Right lobe of liver (tissue), 6 donors: ENCODE measurements at regions of chr1 and their contacts with region 1.

Region 1: GRCh38 chr1:113982033-113982931 is 3.0 kb downstream of the OLFML3 start:
- DNase-seq: peak in 2 of 3 donors; percentile 51
- ATAC-seq: peak; percentile 61 to 79 (median 68)
- H3K4me3 ChIP-seq: no peak overlapping the region
- H3K27ac ChIP-seq: no peak overlapping the region
- H3K4me1 ChIP-seq: peaks cover 0 to 6% (median 0%) of the 10 kb centered on the region in 4 donors
- H3K27me3 ChIP-seq: no peaks in the 10 kb centered on the region
- CTCF ChIP-seq: no peak
- POLR2A ChIP-seq: no peak

Region 2: DNA sequence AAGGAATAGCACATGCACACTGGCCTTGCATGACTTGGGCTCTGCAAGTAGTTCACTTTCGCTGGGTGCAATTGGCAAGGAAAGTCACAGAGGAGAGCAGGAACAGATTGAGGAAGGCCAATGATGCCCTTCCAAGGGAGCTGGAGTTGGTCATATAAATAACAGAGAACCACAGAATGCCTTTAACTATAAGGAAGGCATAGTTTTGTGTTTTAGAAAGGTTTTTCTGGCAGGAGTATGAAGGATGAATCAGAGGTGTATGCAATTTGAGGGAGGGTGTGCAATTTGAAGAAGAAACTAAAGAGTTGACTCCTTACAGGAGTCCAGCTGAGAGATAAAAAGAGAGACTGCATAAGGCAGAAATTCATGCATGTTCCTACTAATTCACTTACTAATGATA is 335.1 kb before region 1 on chr1:
- intact Hi-C with region 1: no loop called
- DNase-seq: no peak
- ATAC-seq: no peak
- H3K4me3 ChIP-seq: no peak overlapping the region
- H3K27ac ChIP-seq: no peak overlapping the region
- H3K4me1 ChIP-seq: no peaks in the 10 kb centered on the region
- H3K27me3 ChIP-seq: no peaks in the 10 kb centered on the region
- CTCF ChIP-seq: no peak
- POLR2A ChIP-seq: no peak

Region 3: GRCh38 chr1:114081437-114082303 is 99.4 kb after region 1 on chr1:
- intact Hi-C with region 1: no loop called
- DNase-seq: peak in 1 of 3 donors; percentile 26
- ATAC-seq: peak; percentile 56 to 78 (median 62)
- H3K4me3 ChIP-seq: no peak overlapping the region
- H3K27ac ChIP-seq: no peak overlapping the region
- H3K4me1 ChIP-seq: no peaks in the 10 kb centered on the region
- H3K27me3 ChIP-seq: no peaks in the 10 kb centered on the region
- CTCF ChIP-seq: no peak
- POLR2A ChIP-seq: no peak

Region 4: DNA sequence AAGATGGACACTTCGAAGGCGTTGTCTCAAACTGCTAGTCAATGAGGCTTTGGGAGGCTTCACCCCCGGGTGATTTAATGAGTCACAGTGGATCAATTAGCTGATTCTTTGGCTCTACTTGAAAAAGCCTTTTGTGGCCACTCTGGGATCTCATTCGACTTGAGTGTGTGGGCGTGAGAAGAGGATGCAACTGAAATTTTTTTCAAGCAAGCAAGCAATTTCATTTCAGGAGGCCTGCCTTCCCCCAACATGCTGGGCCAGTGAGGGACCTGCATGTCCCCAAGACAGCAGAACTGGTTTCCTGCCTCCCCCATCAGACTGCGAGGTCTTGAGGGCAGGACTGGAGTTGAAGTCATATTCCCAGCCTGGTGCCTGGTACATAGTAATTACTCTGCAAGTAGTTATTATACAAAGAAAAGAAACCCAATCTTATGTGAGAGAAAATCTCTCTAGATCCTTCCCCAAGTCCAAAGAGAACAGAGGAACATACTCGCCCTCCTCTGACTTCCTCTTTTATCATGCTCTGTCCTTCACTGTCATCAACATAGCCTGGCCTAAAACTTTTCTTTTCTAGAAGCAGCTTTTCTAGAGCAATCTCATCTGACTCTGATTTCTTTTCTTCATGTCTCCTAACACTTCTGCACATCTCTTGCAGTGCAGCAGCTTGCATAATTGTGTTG is 148.7 kb after region 1 on chr1:
- intact Hi-C with region 1: loop called in 1 of 2 experiments (anchors 5 kb)
- DNase-seq: no peak
- ATAC-seq: peak in 1 of 4 donors; percentile 33
- H3K4me3 ChIP-seq: no peak overlapping the region
- H3K27ac ChIP-seq: no peak overlapping the region
- H3K4me1 ChIP-seq: no peaks in the 10 kb centered on the region
- H3K27me3 ChIP-seq: no peaks in the 10 kb centered on the region
- CTCF ChIP-seq: no peak
- POLR2A ChIP-seq: no peak

Region 5: DNA sequence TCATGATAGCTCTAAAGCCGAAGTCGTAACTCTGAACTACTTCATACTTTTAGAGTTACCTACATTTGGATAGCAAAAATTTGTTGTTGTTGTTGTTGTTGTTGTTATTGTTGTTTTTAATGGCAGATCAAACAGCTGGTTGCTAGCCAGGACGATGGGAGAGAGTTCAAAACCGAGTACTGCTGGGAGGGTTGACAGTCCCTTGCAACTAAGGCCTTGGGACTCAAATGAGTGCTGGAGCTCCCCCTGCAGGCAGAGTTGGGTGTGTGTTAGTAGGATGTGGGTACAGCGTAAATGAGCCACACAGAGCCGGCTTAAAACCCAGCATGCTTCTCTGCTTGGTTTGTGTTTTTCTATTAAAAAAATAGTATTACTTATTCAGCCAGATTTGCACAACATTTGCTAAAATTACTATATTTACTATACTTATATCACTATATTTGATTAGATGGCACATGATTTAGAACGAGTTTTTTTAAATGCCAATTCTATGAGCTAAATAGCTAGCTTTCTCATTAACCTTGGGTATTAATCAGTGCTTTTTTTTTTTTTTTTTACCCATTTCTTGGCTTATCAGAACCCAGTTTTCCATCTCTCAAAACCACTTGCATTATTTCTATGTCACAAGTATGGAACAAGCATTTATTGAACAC is 300.6 kb after region 1 on chr1:
- intact Hi-C with region 1: loop called (anchors 5 to 10 kb)
- DNase-seq: peak; percentile 84 to 85 (median 85)
- ATAC-seq: peak; percentile 98 to 99 (median 99)
- H3K4me3 ChIP-seq: no peak overlapping the region
- H3K27ac ChIP-seq: no peak overlapping the region
- H3K4me1 ChIP-seq: no peaks in the 10 kb centered on the region
- H3K27me3 ChIP-seq: no peaks in the 10 kb centered on the region
- CTCF ChIP-seq: peak; percentile 73 to 89 (median 88)
- POLR2A ChIP-seq: no peak